ENCODE measurements at regions of chr22 and their contacts with region 1.

Region 1: DNA sequence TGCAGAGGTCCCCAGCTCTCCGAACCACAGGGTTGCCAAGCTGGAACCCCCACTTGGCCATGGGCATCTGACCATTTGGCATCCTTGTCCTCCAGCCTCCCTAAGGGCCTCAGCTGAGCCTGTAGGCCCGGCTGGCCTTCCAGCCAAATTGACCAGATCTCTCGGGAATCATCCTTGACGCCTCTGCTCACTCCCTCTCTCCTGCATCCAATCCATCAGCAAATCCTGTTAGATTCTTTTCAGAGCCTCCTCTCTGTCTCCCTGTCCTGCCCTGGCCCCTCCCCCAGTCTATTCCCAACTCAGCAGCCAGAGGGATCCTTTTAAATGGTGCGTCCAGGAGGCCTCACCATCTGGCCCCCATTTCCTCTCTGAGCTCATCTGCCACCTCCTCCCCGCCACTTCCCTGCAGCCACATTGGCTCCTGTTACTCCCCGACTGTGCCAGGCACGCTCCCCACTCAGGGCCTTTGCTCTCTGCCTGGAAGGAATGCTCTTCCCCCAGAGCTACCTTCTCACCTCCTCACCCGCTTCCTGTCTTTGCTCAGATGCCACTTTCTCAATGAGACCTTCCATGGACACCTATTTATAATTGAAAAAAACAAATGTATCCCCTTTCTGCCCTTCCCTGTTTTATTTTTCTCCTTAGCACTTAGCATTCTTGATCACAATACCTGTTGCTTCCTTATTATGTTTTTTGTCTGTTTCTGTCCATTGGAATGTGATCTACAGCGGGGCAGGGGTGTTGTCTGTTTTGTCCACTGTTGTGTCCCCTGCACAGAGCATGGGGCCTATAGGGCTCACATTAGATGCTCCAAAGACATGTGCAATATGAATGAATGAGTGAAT is 78.1 kb downstream of the NFAM1 start:
- DNase-seq: no peak
- ATAC-seq: no peak
- H3K4me3 Mint-ChIP-seq: no peak overlapping the region
- H3K27ac Mint-ChIP-seq: no peak overlapping the region
- H3K4me1 Mint-ChIP-seq: no peaks in the 10 kb centered on the region
- H3K27me3 Mint-ChIP-seq: no peaks in the 10 kb centered on the region

Region 2: DNA sequence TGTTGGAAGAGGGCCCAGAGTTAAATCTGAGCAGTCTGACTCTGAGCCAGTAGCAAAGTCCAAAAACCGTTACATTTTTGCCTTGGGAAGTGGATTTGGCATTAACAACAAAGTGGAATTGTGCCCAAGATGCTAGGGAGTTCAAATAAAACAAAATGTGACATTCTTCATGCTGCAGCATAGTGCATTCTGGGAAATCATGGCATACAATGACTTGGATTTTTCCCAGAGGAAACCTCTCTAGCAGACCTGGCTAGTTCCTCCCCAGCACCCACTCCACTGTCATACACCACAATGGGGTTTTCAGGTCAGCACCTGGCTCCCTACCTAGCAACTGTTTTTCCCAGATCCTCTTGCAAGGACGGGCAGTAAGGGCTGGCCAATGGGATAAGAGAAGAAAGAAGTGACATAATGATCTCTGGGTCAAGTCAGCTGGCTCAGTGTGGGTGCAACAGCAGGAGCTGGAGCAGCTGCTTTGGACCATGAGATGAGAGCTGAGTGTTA is 319.8 kb after region 1 on chr22:
- CTCF ChIA-PET with region 1: no interaction called
- POLR2A ChIA-PET with region 1: no interaction called
- intact Hi-C with region 1: no loop called
- DNase-seq: no peak
- ATAC-seq: no peak
- H3K4me3 Mint-ChIP-seq: no peak overlapping the region
- H3K27ac Mint-ChIP-seq: no peak overlapping the region
- H3K4me1 Mint-ChIP-seq: peaks cover 6% of the 10 kb centered on the region
- H3K27me3 Mint-ChIP-seq: peaks cover 3% of the 10 kb centered on the region

Region 3: GRCh38 chr22:42919199-42919598 is 565.1 kb after region 1 on chr22:
- CTCF ChIA-PET with region 1: no interaction called
- POLR2A ChIA-PET with region 1: interaction called, 11 read pairs
- intact Hi-C with region 1: no loop called
- DNase-seq: peak; percentile 20
- ATAC-seq: peak; percentile 74
- H3K4me3 Mint-ChIP-seq: no peak overlapping the region
- H3K27ac Mint-ChIP-seq: no peak overlapping the region
- H3K4me1 Mint-ChIP-seq: peaks cover 28% of the 10 kb centered on the region
- H3K27me3 Mint-ChIP-seq: no peaks in the 10 kb centered on the region

Measured in activated CD4-positive, alpha-beta T cell treated with anti-CD3 and anti-CD28 coated beads for 36 hours (primary cell).